Activated CD4-positive, alpha-beta T cell treated with anti-CD3 and anti-CD28 coated beads, Interleukin-2, amount 10 ng/mL, durations not matched to agents 24 days and 14 days (primary cell): ENCODE measurements at regions of chrX and their contacts with region 1.

Region 1: DNA sequence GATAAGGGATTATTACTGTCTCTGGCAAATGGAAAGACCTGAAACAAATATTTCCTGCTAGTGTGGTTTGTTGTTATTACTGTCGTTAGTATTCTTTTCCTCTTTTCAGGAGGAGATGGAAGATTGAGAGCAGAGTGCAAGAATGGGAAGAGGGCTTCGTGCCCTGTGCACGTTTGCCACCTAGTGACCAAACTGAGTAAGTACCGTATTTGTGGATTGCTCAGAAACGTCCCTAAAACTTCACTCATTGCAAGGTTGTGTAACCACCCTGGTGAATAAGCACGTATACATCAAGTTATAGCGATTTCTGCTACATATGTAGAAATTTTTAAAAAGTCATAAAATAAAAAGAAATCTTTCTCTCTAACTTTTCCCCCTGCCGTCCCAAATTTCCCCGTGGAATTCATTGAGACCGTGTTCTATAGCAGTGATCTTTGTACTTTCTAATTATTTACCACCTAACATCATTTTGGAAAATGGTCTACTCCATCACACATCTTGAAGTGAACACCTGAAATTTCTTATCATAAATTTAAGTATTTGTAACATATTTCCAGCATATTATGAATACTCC is 24.3 kb downstream of the LINC00632 start:
- DNase-seq: peak; percentile 56
- H3K4me3 Mint-ChIP-seq: no peak overlapping the region
- H3K27ac Mint-ChIP-seq: no peak overlapping the region
- H3K4me1 Mint-ChIP-seq: no peaks in the 10 kb centered on the region
- H3K27me3 Mint-ChIP-seq: no peaks in the 10 kb centered on the region

Region 2: DNA sequence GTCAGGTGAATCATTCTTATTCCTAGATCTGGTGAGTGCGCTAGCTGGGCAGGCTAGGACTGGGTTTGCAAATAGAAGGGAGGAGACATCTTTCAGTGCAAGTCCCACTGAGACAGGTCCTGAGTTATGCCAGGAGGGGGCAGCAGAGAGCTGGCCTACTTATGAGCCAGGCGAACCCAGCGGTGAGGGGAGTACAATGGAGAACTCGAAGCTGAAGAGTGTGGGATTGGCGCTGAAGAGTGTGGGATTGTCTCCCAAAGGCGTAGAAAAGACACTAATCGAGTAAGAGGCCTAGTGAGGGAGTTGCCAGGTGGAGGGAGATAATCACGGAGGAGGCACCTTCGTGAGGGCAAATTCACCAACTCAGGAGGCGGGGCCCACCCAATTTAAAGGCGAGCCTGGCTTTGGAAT is 676.9 kb before region 1 on chrX:
- intact Hi-C with region 1: loop called (anchors 5 kb)
- DNase-seq: peak; percentile 81
- H3K4me3 Mint-ChIP-seq: no peak overlapping the region
- H3K27ac Mint-ChIP-seq: no peak overlapping the region
- H3K4me1 Mint-ChIP-seq: peaks cover 2% of the 10 kb centered on the region
- H3K27me3 Mint-ChIP-seq: no peaks in the 10 kb centered on the region

Region 3: GRCh38 chrX:140572724-140573123 is 161.1 kb before region 1 on chrX:
- intact Hi-C with region 1: loop called (anchors 2 kb)
- DNase-seq: peak; percentile 60
- H3K4me3 Mint-ChIP-seq: no peak overlapping the region
- H3K27ac Mint-ChIP-seq: no peak overlapping the region
- H3K4me1 Mint-ChIP-seq: no peaks in the 10 kb centered on the region
- H3K27me3 Mint-ChIP-seq: no peaks in the 10 kb centered on the region

Region 4: GRCh38 chrX:140697615-140698014 is 36.2 kb before region 1 on chrX:
- intact Hi-C with region 1: loop called (anchors 5 kb)
- DNase-seq: no peak
- H3K4me3 Mint-ChIP-seq: no peak overlapping the region
- H3K27ac Mint-ChIP-seq: no peak overlapping the region
- H3K4me1 Mint-ChIP-seq: no peaks in the 10 kb centered on the region
- H3K27me3 Mint-ChIP-seq: no peaks in the 10 kb centered on the region

Region 5: DNA sequence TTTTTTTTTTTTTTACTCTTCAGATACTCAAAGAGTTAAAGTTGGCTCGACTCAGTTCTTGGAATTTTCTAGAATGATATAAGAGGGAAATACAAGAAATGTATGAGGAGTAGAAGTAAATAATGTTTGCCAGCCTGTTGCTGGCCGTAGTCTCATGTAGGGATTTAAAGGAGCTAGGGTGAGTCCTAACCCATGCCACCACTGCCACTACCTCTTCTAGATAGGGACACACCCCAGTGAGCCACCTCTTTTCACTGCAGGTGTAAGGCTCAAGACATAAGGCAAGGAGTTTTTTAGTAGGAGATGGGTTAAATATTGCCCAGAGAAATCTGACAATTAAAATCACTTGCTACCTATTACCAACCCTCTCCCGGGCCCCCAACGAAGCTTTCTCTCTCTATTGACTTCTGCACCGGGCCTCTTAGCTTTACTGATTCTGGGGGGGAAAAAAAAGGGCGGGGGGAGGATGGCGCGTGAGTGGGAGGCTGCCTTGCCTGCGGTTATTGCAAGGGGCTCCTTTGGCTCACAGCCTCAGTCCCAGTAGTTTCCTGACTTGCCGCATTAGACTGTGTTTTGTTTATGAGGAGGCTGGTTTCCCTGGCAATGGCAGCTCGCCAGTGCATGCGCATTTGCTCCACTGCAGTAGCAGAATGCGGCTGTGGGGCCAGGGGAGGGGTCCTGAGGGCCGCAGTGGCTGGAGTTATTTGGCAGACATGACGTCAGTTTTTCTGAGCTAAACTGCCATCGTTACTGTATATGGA is 21.3 kb before region 1 on chrX:
- intact Hi-C with region 1: no loop called
- DNase-seq: peak; percentile 62
- H3K4me3 Mint-ChIP-seq: no peak overlapping the region
- H3K27ac Mint-ChIP-seq: no peak overlapping the region
- H3K4me1 Mint-ChIP-seq: no peaks in the 10 kb centered on the region
- H3K27me3 Mint-ChIP-seq: peaks cover 2% of the 10 kb centered on the region

Region 6: GRCh38 chrX:140766024-140766611 is 32.3 kb after region 1 on chrX:
- intact Hi-C with region 1: no loop called
- DNase-seq: peak; percentile 76
- H3K4me3 Mint-ChIP-seq: peak overlapping the region; percentile 58
- H3K27ac Mint-ChIP-seq: no peak overlapping the region
- H3K4me1 Mint-ChIP-seq: peaks cover 3% of the 10 kb centered on the region
- H3K27me3 Mint-ChIP-seq: peaks cover 14% of the 10 kb centered on the region

Region 7: GRCh38 chrX:141122419-141122818 is 388.6 kb after region 1 on chrX:
- intact Hi-C with region 1: no loop called
- DNase-seq: no peak
- H3K4me3 Mint-ChIP-seq: no peak overlapping the region
- H3K27ac Mint-ChIP-seq: no peak overlapping the region
- H3K4me1 Mint-ChIP-seq: no peaks in the 10 kb centered on the region
- H3K27me3 Mint-ChIP-seq: no peaks in the 10 kb centered on the region